ENCODE measurements at regions of chr12 and their contacts with region 1.

Region 1: GRCh38 chr12:7859552-7859951 is 13.2 kb downstream of the SLC2A14 start:
- H3K4me3 Mint-ChIP-seq: no peak overlapping the region
- H3K27ac Mint-ChIP-seq: no peak overlapping the region
- H3K4me1 Mint-ChIP-seq: peaks cover 16% of the 10 kb centered on the region
- H3K27me3 Mint-ChIP-seq: peaks cover 7% of the 10 kb centered on the region

Region 2: DNA sequence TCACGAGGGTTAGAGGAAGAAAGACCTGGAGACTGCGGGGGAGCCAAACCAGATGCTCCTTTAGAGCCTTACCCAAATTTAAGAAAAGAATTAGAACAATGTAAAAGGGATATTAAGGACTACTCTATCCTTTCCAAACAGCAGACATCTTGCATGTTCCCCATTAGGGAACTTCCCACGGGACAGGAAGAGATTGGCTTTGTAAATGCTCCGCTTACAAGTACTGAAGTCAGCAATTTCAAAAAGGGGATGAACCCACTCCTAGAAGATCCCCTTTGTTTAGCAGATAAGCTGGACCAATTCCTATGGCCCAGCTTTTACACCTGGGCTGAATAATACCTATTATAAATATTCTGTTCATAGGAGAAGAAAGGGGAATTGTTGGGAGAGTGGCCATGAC is 268.0 kb before region 1 on chr12:
- intact Hi-C with region 1: no loop called
- H3K4me3 Mint-ChIP-seq: no peak overlapping the region
- H3K27ac Mint-ChIP-seq: peak overlapping the region; percentile 45
- H3K4me1 Mint-ChIP-seq: peaks cover 34% of the 10 kb centered on the region
- H3K27me3 Mint-ChIP-seq: peaks cover 7% of the 10 kb centered on the region

Region 3: DNA sequence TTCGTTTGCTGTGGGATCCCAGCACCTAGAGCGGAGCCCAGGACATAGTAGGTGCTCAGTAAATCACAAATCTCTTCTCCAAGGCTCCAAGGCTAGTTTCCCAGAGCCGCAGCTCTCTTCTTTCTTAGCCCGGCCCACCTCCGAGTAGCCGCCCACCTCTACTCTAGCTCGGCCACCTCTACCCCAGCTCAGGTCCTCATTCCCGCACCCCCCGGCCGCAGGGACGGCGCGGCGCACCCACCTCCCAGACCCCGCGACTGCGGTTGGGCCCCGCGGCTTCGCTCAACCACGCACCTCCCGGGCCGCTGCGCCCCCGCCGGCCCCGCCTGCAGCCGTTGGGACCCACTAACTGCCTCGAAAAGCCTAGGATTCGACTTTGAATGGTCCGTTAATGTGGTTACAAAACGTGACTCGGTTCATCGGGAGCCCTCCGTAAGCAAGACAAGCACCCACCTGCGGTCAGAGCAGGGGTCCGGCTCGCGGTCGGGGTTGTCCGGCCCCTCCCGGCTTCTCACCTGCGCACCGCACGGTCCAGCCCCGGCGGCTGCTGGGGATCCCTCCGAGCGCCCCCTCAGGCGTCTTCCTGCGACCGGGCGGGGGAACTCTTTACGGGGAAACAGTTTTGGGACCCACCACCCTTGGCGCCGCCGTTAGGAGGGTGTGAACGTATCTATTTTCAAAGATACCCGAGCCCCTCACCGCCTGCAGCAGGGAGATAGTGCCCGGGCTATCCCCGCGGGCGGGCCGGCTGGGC is 13.2 kb after region 1 on chr12 and contains the start of gene SLC2A14:
- intact Hi-C with region 1: no loop called
- H3K4me3 Mint-ChIP-seq: peak within 1 kb of the TSS; percentile 44
- H3K27ac Mint-ChIP-seq: no peak within 1 kb of the TSS
- H3K4me1 Mint-ChIP-seq: peaks cover 17% of the 10 kb centered on the region
- H3K27me3 Mint-ChIP-seq: peaks cover 42% of the 10 kb centered on the region

Region 4: GRCh38 chr12:7907009-7907408 is 47.5 kb after region 1 on chr12:
- intact Hi-C with region 1: loop called (anchors 10 kb)
- H3K4me3 Mint-ChIP-seq: no peak overlapping the region
- H3K27ac Mint-ChIP-seq: no peak overlapping the region
- H3K4me1 Mint-ChIP-seq: peaks cover 8% of the 10 kb centered on the region
- H3K27me3 Mint-ChIP-seq: no peaks in the 10 kb centered on the region

Region 5: GRCh38 chr12:7995266-7995963 is 135.9 kb after region 1 on chr12:
- intact Hi-C with region 1: loop called (anchors 1 kb)
- H3K4me3 Mint-ChIP-seq: no peak overlapping the region
- H3K27ac Mint-ChIP-seq: no peak overlapping the region
- H3K4me1 Mint-ChIP-seq: peaks cover 21% of the 10 kb centered on the region
- H3K27me3 Mint-ChIP-seq: no peaks in the 10 kb centered on the region